GM23248 (cell line): ENCODE measurements at regions of chr16 and their contacts with region 1.

Region 1: DNA sequence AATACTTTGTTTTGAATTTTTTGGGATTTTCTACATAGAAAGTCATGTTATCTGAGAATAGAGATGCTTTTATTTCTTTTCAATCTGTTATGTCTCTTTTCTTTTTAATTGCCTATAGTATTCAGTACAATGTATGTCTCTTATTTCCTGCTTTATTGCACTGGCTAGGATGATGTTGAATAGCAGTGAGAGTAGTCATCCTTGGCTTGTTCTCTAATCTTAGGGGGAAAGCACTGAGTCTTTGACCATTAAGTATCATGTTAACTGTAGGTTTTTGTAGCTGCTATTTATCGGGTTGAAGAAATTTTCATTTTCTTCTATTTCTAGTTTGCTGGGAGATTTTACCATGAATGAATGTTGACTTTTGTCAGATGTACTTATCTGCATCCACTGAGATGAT is 10.0 kb upstream of the ABCA3 start:
- DNase-seq: peak; percentile 52
- H3K4me3 ChIP-seq: no peak overlapping the region
- H3K27ac ChIP-seq: no peak overlapping the region
- H3K4me1 ChIP-seq: peaks cover 17% of the 10 kb centered on the region
- H3K27me3 ChIP-seq: no peaks in the 10 kb centered on the region

Region 2: DNA sequence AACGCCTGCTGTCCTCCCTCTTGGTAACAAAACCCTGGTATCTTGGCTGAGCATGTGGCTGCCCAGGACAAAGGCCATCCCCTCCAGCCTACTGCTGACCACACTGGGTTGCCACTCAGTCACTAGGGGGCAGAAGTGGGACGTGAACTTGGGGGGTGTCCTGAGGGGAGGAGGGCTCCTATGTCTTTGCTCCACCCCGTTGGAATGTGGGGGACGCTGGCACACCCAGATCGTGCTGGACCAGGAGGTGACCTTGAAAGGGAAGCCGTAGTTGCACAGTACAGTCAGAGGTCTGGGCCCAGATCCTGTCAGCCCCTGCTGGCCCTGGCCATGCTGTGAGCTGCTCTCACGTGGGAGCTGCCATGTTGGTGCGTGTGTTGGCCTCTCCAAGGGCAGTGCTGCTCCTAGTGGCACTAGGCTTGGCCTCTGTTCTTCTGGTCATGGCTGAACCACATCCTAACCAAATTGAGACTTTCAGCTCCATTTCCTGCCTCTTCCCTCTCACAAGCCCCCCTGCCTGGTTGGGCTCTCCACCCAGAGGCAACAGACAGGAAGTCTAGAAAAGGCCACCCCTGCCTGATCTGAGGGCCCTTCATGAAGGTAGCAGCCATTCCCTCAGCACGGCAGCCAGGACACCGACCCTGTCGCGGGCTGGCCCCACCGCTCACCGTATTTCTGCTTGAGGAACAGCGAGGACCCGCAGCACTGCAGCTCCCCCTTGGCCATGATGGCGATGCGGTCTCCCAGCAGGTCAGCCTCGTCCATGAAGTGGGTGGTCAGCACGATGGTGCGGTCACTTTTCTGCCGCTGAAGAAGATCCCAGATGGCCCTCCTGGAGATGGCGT is 53.6 kb before region 1 on chr16:
- in situ Hi-C with region 1: loop called (anchors 10 kb)
- DNase-seq: peak; percentile 44
- H3K4me3 ChIP-seq: no peak overlapping the region
- H3K27ac ChIP-seq: no peak overlapping the region
- H3K4me1 ChIP-seq: no peaks in the 10 kb centered on the region
- H3K27me3 ChIP-seq: no peaks in the 10 kb centered on the region